Heart left ventricle (tissue), 16 donors: ENCODE measurements at regions of chr11 and their contacts with region 1.

Region 1: DNA sequence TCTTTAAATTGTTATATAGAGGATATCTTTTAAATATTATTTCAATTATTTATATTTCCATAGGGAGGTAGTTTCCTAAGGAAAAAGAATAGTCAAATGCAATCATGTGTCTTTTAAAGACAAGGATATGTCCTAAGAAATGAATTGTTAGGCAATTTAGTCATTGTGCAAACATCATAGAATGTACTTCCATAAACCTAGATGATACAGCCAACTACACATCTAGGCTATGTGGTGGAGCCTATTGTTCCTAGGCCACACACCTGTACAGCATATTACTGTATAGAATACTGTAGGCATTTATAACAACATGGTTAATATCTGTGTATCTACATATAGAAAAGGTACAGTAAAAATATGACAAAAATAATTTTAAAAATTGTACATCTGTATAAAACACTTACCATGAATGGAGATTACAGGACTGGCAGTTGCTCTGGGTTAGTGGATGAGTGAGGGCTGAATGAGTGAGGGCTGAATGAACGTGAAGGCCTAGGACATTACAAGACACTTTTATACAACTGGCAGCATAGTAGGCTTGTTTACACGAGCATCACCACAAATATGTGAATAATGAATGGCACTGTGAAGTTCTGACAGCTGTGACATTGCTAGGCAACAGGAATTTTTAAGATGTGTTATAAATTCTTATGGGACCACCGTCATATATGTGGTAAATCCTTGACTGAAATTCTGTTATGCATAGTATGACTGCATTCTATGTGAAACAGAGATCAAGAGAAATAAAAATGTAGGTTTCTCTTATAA is 1879.0 kb upstream of the RAG2 start:
- DNase-seq: no peak
- ATAC-seq: no peak
- H3K4me3 ChIP-seq: no peak overlapping the region
- H3K27ac ChIP-seq: no peak overlapping the region
- H3K4me1 ChIP-seq: no peaks in the 10 kb centered on the region
- H3K27me3 ChIP-seq: no peaks in the 10 kb centered on the region
- CTCF ChIP-seq: no peak
- POLR2A ChIP-seq: no peak

Region 2: DNA sequence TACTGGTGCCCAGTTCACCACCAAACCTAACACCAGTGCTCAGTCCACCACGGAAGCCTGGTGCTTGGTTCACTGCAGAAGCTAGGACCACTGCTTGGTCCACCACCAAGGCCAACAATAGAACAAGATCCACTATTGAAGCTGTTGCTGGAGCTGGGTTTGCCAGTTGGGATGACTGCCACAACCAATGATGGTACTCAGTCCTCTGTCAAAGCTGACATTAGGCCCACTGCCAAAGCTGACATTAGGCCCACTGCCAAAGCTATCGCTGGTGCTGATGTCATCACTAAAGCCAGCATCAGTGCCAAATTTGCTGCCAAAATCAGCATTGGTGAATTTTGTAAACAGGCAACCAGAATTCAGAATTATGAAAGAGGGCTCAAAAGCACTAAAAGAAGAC is 28.7 kb before region 1 on chr11:
- intact Hi-C with region 1: loop called in 1 of 10 experiments (anchors 2 kb)
- DNase-seq: peak in 3 of 5 donors; percentile 20 to 29 (median 22)
- ATAC-seq: peak in 2 of 4 donors; percentile 31 to 56
- H3K4me3 ChIP-seq: no peak overlapping the region
- H3K27ac ChIP-seq: no peak overlapping the region
- H3K4me1 ChIP-seq: no peaks in the 10 kb centered on the region
- H3K27me3 ChIP-seq: no peaks in the 10 kb centered on the region
- CTCF ChIP-seq: no peak
- POLR2A ChIP-seq: no peak